ENCODE measurements at regions of chr13 and their contacts with region 1.

Region 1: DNA sequence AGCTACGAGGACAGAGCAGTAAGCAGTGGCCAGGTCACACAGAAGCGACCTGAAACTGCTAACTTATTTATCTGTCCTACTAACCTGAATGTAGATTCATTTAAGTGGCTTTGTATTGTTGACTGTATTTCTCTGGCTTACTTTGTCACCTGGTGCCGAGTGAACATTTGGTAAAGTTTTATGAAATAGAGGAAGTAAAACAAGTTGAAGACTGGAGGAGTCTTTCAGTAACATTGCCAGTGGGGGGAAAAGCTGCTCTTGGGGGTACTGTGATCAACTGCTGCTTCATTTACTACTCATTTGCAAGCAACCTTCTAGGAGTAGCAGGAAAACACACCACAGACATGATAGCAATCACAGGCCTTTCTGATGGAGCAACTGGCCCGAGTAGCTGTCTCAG is 615.0 kb downstream of the FGF9 start:
- DNase-seq: no peak

Region 2: DNA sequence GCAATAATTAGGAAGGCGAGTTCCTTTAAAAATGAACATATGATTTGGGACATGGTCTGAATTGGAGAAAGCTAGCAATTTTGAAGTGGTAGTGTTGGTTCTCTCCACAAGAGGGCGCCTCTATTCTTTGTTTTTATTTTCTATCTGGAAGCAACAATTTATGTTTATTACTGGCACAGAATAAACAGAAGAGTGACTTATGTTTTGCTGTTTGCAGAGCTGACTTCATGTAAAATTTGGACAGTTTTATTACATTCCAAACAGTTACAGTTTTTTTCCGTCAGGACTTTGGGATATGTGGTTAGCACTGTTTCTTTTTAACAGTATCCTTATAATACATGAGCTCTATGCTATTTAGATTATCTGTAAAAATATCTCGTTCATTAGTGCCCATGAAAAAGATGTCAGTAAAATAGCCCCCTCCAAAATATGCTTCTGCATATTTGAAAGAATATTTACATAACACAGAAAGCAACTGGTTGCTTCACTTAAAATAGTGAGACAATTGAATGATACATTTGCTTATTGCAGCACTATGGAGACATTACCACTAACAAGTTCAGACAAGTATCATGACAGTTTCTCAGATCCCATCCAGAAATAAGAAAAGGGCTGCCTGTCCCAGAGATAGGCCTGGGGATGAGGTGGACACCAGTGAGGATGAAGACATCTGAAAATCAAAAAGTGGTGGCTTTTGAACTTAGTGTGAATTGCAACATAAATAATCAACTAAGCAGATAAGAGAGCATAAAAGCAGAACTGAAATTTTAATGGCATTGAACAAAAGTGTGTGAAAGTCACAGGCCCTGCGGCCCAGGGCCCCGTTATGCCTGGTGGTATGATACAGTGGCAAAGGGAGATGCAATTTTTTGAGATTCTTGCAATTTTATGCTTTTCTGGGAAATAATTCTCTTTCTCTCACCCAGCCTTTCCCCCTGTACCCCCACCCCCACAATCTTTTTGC is 647.3 kb before region 1 on chr13:
- intact Hi-C with region 1: loop called (anchors 10 kb)
- DNase-seq: peak in 17 of 42 donors; percentile 13 to 70 (median 24)